ENCODE measurements at regions of chr7 and their contacts with region 1.

Region 1: GRCh38 chr7:129664029-129665012 is 52.8 kb downstream of the NRF1 start:
- DNase-seq: peak; percentile 28
- H3K4me3 ChIP-seq: no peak overlapping the region
- H3K27me3 ChIP-seq: no peaks in the 10 kb centered on the region
- CTCF ChIP-seq: peak; percentile 61

Region 2: DNA sequence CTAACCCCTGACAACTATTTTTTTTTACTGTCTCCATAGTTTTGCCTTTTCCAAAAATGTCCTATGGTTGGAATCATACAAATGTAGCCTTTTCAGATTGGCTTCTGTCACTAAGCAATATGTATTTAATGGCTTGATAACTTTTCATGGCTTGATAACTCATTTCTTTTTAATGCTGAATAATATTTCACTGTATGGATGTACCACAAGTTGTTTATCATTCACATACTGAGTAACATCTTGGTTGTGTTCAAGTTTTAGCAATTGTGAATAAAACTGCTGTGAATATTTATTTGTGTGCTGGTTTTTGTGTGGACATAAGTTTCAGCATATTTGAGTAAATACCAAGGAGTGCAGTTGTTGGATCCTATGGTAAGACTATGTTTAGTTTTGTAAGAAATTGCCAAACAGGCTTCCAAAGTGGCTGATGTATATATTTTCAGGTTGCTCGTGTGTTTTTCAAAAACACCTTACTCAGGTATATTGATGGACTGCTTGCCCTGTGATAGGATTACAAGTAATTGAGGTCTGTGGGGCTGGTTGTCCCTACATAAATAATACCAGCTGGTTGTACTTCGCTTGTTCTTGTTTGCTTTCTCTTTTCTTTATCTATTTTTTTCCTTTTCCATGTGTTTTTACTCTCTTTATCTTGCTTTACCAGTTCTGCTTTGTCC is 29.8 kb before region 1 on chr7:
- CTCF ChIA-PET with region 1: no interaction called
- POLR2A ChIA-PET with region 1: no interaction called
- DNase-seq: no peak
- H3K4me3 ChIP-seq: no peak overlapping the region
- H3K27me3 ChIP-seq: no peaks in the 10 kb centered on the region
- CTCF ChIP-seq: no peak

Region 3: DNA sequence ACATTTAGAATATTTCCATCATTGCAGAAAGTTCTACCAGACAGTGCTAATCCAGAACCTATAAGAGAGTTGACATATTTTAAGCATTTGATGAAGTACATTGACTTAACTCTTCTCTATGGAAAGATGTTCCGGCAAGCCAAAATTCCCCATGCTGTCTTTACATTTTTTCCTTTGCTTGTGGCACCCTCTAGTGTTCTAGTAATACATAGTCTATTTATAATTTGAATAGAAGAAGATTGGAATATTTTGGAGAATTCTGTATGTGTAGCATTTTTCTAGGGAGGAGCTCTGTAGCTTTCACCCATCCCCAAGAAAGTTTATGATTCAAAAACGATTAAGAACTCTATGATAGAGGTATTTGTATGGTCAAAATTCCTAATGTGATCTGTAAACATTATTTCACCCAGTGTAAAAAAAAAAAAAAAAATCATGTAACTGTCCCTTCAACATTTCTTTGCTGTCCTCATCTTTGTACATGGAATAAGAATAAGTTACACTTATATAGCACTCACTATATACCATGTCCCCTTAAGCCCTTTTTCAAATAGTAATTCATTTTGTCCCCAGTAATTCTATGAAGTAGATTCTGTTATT is 19.6 kb before region 1 on chr7:
- CTCF ChIA-PET with region 1: interaction called, 13 read pairs
- POLR2A ChIA-PET with region 1: no interaction called
- DNase-seq: no peak
- H3K4me3 ChIP-seq: no peak overlapping the region
- H3K27me3 ChIP-seq: no peaks in the 10 kb centered on the region
- CTCF ChIP-seq: peak; percentile 57

Region 4: DNA sequence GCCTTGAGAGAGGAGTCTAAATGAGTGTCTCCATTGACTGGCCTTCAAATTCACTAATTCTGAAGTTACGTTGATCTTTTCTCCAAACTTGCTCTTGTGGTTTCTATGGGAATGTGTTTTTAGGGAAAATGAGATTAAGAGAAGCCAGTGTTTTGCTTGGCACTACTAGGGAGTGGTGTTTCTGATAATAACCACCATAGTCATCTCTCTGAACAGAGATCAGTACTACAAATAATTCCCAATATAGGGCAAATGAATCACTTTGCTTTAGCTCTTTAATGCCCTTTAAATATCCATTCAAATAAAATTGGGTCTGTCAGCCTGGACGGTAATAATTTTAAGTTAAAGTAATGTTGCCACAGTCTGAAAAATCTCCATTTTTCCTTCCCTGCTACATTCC is 38.0 kb after region 1 on chr7:
- CTCF ChIA-PET with region 1: no interaction called
- POLR2A ChIA-PET with region 1: no interaction called
- DNase-seq: no peak
- H3K4me3 ChIP-seq: no peak overlapping the region
- H3K27me3 ChIP-seq: no peaks in the 10 kb centered on the region
- CTCF ChIP-seq: no peak

Region 5: DNA sequence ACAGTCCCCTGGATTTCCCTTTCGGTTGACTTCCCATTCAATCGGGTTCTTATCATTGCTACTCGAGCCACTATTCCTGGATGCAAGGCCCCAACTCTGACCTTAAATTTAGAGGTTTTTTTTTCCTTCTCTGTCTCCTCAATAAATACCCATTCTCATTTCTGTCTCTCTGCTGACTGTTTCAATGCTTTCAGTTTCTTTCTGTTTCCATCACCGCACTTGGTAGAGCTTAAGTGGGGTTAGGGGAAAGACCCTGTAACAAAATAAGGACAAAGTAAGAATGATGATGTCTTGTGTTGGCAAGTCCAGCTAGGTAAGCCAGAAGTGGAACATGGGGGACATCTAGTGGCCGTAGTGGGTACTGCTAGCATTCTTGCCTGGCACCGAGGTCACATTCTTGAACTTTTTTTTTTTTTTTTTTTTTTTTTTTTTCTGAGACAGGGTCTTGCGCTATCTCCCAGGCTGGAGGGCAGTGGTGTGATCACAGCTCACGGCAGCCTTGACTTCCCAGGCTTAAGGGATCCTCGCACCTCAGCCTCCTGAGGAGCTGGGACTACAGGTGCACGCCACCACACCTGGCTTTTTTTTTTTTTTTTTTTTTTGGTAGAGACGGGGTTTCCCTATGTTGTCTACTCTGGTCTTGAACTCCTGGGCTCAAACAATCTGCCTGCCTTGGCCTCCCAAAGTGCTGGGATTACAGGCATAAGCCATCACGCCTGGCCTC is 346.5 kb after region 1 on chr7:
- CTCF ChIA-PET with region 1: interaction called, 43 read pairs
- POLR2A ChIA-PET with region 1: no interaction called
- DNase-seq: peak; percentile 61
- H3K4me3 ChIP-seq: no peak overlapping the region
- H3K27me3 ChIP-seq: no peaks in the 10 kb centered on the region; the same call in 1 of the 2 replicates
- CTCF ChIP-seq: peak; percentile 89